MCF 10A (cell line): ENCODE measurements at regions of chr1 and their contacts with region 1.

Region 1: GRCh38 chr1:229227298-229227919 is 43.5 kb upstream of the RAB4A start:
- DNase-seq: peak; percentile 94
- H3K4me3 Mint-ChIP-seq: peak overlapping the region; percentile 5
- H3K27ac Mint-ChIP-seq: peak overlapping the region; percentile 1
- H3K4me1 Mint-ChIP-seq: peaks cover 66% of the 10 kb centered on the region
- H3K27me3 Mint-ChIP-seq: no peaks in the 10 kb centered on the region
- CTCF ChIP-seq: peak; percentile 99

Region 2: DNA sequence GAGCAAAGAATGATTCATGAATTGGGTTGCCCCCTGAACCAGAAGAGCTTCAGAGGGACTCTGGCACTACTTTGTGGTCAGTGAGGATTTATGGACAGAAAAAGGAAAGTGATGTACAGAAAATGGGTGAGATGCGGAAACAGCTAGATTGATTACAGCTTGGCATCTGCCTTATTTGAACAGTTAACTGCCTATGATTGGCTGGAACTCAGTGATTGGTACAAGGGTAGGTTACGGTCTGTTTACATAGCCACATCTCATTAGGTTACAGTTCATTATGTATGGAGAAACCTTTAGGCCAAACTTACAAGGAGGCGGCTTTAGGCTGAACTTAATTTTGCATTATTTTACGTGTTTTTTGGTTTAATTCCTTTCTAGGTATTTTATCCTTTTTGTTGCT is 521.1 kb before region 1 on chr1:
- CTCF ChIA-PET with region 1: interaction called, 39 read pairs
- POLR2A ChIA-PET with region 1: interaction called, 4 read pairs
- intact Hi-C with region 1: no loop called
- DNase-seq: no peak
- H3K4me3 Mint-ChIP-seq: no peak overlapping the region
- H3K27ac Mint-ChIP-seq: no peak overlapping the region
- H3K4me1 Mint-ChIP-seq: no peaks in the 10 kb centered on the region
- H3K27me3 Mint-ChIP-seq: peaks cover 11% of the 10 kb centered on the region
- CTCF ChIP-seq: no peak

Region 3: DNA sequence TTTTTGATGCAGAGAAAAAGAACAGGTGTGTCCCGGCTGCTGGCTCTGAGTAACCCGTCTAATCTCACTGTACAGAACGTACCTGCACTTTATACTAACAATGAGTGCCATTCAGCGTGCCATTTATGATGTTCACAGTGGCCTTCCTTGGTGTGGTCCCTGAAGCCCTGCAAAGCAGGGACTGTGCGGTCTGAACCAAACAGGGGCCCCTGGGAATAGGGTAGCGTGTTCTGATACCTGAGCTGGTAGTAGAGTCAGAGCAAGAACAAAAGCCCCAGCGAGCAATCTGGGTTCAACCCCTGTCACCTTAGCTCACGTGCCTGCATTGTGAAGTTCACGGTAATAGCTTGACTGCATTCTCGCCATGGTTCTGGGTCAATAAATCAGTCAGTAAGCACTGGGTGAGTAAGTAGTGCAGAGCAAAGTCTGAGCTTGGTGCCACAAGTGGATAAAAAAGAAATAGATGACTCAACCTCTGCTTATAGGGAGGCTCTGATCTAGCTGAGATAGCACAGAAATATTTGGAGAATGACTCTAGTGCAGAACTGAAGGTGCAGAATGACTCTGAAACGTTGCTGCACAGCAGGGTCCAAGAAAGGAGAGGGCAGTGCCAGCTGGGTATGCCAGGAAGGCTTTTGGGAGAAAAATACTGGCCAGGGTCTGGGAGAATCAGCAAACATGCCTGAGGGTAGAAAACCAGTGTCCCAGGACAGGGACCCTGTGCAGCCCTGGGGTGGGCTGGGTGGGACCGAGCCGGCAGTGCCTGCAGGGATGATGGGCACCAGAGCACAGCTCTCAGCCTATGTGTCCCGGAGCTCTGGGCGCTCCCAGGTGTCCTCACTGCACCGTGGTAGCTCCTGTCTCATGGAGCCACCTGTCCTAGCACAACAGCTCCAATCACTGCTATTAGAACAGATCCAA is 366.2 kb before region 1 on chr1:
- CTCF ChIA-PET with region 1: interaction called, 11 read pairs
- POLR2A ChIA-PET with region 1: interaction called, 17 read pairs
- intact Hi-C with region 1: no loop called
- DNase-seq: peak; percentile 88
- H3K4me3 Mint-ChIP-seq: peak overlapping the region; percentile 1
- H3K27ac Mint-ChIP-seq: peak overlapping the region; percentile 2
- H3K4me1 Mint-ChIP-seq: peaks cover 32% of the 10 kb centered on the region
- H3K27me3 Mint-ChIP-seq: peaks cover 20% of the 10 kb centered on the region
- CTCF ChIP-seq: no peak

Region 4: DNA sequence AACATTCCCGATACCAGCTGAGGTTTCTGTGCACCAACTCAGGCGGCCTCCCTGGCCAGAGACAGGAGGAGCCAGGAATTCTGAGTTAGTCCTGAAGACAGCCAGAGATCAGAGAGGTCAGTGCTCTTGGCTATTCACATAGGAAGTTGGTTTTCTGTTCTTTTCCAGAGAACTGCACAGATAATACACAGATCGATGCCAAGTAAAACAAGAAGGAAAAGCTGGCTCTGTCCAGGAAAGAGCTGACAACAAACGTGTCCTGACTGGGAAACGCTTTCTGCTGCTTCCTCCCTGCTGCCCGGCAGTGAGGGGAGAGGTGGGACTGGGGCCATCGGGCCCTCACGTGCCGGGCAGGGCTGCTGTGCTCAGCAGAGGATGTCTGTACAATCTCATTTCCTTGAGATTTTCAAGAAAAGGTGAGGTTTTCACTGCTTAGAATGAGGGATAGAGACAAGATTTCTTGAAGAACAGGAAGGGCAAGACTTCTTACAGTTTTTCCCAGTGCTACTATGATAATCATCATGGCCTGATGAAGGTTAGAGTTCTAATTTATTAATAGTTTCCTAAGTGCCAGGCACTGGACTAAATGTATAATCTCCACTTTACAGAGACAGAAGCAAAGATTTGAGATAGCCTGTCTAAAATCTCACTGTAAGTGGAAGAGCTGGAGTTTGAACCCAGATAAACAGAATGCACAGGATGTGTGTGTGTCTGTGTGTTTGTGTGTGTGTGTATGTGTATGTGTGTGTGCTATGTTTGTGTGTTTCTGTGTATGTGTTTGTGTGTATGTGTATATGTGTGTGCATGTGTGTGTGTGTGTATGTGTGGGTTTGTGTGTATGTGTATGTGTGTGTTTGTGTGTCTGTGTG is 167.5 kb before region 1 on chr1:
- CTCF ChIA-PET with region 1: interaction called, 8 read pairs
- POLR2A ChIA-PET with region 1: interaction called, 3 read pairs
- intact Hi-C with region 1: loop called (anchors 5 kb)
- DNase-seq: peak; percentile 85
- H3K4me3 Mint-ChIP-seq: no peak overlapping the region
- H3K27ac Mint-ChIP-seq: peak overlapping the region; percentile 13
- H3K4me1 Mint-ChIP-seq: peaks cover 28% of the 10 kb centered on the region
- H3K27me3 Mint-ChIP-seq: peaks cover 15% of the 10 kb centered on the region
- CTCF ChIP-seq: no peak

Region 5: GRCh38 chr1:229186373-229187056 is 40.9 kb before region 1 on chr1:
- CTCF ChIA-PET with region 1: interaction called, 10 read pairs
- POLR2A ChIA-PET with region 1: interaction called, 23 read pairs
- intact Hi-C with region 1: no loop called
- DNase-seq: no peak
- H3K4me3 Mint-ChIP-seq: no peak overlapping the region
- H3K27ac Mint-ChIP-seq: no peak overlapping the region
- H3K4me1 Mint-ChIP-seq: peaks cover 22% of the 10 kb centered on the region
- H3K27me3 Mint-ChIP-seq: no peaks in the 10 kb centered on the region
- CTCF ChIP-seq: no peak

Region 6: DNA sequence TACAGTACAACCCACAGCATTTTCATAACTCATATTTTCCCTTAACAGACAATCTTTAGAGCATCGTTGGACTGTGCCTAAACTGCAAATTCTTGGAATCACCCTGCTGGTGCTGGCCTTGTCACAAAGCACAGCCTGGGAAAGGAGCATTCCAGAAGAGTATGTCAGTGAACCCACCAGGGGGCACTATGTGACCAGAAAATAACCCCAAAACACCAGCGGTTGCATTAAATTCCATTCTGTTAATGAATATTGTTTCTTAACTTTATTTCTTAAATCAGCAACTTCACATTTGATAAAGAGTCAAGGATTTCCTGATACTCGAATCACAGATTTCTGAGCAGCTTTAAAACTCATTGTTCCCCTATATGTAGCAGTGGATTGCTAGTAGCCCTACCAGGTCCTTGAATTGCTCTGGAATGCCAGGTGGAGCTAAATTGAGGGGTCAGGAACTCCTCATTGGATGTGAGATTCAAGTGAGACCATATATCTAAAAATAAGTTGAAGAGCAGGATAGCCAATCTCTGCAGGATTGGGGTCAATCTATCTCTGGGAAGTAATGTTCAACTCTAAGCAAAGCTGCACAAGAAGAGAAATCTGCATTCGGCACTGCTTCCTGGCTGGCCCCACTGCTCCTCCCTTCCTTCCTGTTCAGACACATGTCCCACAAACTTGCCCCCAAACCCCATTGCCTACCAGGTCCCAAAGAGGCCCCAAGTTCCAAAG is 30.8 kb after region 1 on chr1:
- CTCF ChIA-PET with region 1: interaction called, 201 read pairs
- POLR2A ChIA-PET with region 1: interaction called, 126 read pairs
- intact Hi-C with region 1: loop called (anchors 1 kb)
- DNase-seq: peak; percentile 88
- H3K4me3 Mint-ChIP-seq: no peak overlapping the region
- H3K27ac Mint-ChIP-seq: no peak overlapping the region
- H3K4me1 Mint-ChIP-seq: peaks cover 23% of the 10 kb centered on the region
- H3K27me3 Mint-ChIP-seq: no peaks in the 10 kb centered on the region
- CTCF ChIP-seq: peak; percentile 98